ENCODE measurements at regions of chr7 and their contacts with region 1.

Region 1: GRCh38 chr7:137454246-137454724 is 110.8 kb upstream of the PTN start:
- DNase-seq: no peak
- H3K4me3 ChIP-seq: peak overlapping the region in 1 of 2 donors; percentile 10
- H3K27ac ChIP-seq: peak overlapping the region; percentile 43 to 56
- H3K4me1 ChIP-seq: no peaks in the 10 kb centered on the region
- H3K27me3 ChIP-seq: no peaks in the 10 kb centered on the region
- CTCF ChIP-seq: peak; percentile 34 to 66 (median 56)

Region 2: DNA sequence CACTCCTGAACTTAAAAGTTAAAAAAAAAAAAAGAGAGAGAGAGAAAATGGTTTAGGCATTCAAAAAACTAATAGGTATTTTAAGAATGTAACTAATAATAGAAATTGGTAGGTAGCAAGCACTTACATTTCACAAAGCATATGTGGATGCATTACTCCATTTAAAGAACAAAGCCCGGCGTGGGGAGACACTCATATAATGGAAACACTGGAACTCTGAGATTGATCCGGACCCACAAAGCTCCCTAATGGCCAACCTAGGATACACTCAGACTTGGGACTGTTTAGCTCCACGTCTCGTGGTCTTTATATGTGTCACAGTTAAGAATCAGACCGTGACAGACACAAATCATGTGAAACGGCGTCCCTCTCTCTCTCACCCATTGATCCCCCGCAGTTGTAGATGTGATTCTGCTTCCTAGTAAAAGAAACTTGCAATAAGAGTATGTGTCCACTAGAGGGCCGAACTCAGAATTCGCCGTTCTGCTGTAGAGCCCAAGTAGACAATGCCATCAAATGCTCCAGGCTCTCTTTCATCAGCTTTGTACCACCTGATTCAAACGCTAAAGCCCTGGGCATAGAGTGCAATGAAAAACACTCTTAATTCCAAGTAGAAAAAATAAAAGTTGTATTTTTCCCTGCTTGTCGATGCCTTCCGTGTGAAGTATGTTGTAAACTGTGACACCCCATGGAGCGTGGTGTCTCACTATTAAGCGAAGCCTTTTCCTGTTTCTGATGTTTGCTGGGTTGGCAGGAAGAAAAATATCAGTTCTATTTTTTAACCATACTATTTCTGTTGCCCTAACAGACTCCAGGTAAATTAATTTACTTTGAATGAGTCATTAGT is 1048.1 kb before region 1 on chr7:
- intact Hi-C with region 1: loop called (anchors 10 kb)
- DNase-seq: no peak
- H3K4me3 ChIP-seq: no peak overlapping the region
- H3K27ac ChIP-seq: no peak overlapping the region
- H3K4me1 ChIP-seq: no peaks in the 10 kb centered on the region
- H3K27me3 ChIP-seq: no peaks in the 10 kb centered on the region
- CTCF ChIP-seq: peak in 2 of 3 experiments; percentile 42 to 60

Region 3: DNA sequence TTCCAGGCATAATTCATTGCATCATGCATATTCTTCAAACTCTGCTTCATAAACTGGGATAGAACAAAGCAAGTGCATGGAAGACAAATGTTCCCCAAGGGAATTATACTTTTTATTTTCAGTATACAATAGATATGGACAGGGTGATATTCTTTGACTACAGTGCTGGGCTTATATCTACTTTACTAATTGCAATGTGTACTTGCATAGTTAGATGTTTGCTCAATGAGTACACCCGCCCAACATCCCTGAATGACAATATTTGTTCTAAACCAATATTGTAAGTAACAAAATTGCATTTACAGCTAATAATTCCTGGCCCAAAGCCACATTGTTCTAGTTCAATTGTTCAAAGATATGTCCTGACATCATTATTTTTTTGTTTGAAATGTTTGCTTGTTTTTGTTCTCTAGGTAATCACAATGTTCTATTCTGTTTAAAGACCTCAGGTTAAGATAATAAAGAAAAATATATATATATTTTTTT is 282.1 kb before region 1 on chr7:
- intact Hi-C with region 1: loop called (anchors 5 kb)
- DNase-seq: no peak
- H3K4me3 ChIP-seq: no peak overlapping the region
- H3K27ac ChIP-seq: no peak overlapping the region
- H3K4me1 ChIP-seq: no peaks in the 10 kb centered on the region
- H3K27me3 ChIP-seq: no peaks in the 10 kb centered on the region
- CTCF ChIP-seq: no peak

Region 4: GRCh38 chr7:137539111-137539715 is 84.9 kb after region 1 on chr7:
- intact Hi-C with region 1: no loop called
- DNase-seq: no peak
- H3K4me3 ChIP-seq: no peak overlapping the region
- H3K27ac ChIP-seq: no peak overlapping the region
- H3K4me1 ChIP-seq: no peaks in the 10 kb centered on the region
- H3K27me3 ChIP-seq: no peaks in the 10 kb centered on the region
- CTCF ChIP-seq: no peak

Region 5: GRCh38 chr7:137592232-137592896 is 138.1 kb after region 1 on chr7:
- intact Hi-C with region 1: loop called (anchors 5 kb)
- DNase-seq: peak in 1 of 2 donors; percentile 70
- H3K4me3 ChIP-seq: no peak overlapping the region
- H3K27ac ChIP-seq: peak overlapping the region in 1 of 2 donors; percentile 21
- H3K4me1 ChIP-seq: peaks cover 0 to 3% of the 10 kb centered on the region in 2 donors
- H3K27me3 ChIP-seq: no peaks in the 10 kb centered on the region
- CTCF ChIP-seq: peak; percentile 37 to 74 (median 60)

Measured in ascending aorta (tissue), 2 donors.